ENCODE measurements at regions of chr2 and their contacts with region 1.

Region 1: DNA sequence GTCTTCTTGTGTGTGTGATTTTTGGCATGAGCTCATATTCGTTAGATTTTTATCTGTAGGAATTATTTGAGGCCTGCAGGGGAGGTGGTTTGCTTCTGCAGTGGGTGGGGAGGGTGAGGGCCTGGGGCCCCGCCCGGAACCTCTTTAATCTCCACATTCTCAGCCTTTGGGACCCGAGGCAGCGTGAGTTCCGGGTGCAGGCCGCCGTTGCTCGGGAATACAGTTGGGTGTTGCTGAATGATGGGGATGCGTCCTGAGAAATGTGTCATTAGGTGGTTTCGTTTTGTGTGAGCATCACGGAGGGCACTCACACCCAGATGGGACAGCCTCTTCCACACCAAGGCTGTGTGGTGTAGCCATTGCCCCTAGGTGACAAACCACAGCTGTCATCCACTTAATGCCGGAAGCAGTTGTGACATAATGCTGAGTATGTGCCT is 13.7 kb upstream of the GAL3ST2 start:
- DNase-seq: peak; percentile 65
- ATAC-seq: peak; percentile 76
- H3K4me3 Mint-ChIP-seq: no peak overlapping the region
- H3K27ac Mint-ChIP-seq: peak overlapping the region; percentile 76
- H3K4me1 Mint-ChIP-seq: peaks cover 17% of the 10 kb centered on the region
- H3K27me3 Mint-ChIP-seq: no peaks in the 10 kb centered on the region

Region 2: GRCh38 chr2:241803387-241804325 is 40.7 kb after region 1 on chr2:
- CTCF ChIA-PET with region 1: no interaction called
- POLR2A ChIA-PET with region 1: no interaction called
- intact Hi-C with region 1: loop called in 1 of 2 experiments (anchors 5 kb)
- DNase-seq: peak; percentile 69
- ATAC-seq: peak; percentile 76
- H3K4me3 Mint-ChIP-seq: peak overlapping the region; percentile 58
- H3K27ac Mint-ChIP-seq: peak overlapping the region; percentile 12
- H3K4me1 Mint-ChIP-seq: peaks cover 7% of the 10 kb centered on the region
- H3K27me3 Mint-ChIP-seq: peaks cover 6% of the 10 kb centered on the region

Region 3: DNA sequence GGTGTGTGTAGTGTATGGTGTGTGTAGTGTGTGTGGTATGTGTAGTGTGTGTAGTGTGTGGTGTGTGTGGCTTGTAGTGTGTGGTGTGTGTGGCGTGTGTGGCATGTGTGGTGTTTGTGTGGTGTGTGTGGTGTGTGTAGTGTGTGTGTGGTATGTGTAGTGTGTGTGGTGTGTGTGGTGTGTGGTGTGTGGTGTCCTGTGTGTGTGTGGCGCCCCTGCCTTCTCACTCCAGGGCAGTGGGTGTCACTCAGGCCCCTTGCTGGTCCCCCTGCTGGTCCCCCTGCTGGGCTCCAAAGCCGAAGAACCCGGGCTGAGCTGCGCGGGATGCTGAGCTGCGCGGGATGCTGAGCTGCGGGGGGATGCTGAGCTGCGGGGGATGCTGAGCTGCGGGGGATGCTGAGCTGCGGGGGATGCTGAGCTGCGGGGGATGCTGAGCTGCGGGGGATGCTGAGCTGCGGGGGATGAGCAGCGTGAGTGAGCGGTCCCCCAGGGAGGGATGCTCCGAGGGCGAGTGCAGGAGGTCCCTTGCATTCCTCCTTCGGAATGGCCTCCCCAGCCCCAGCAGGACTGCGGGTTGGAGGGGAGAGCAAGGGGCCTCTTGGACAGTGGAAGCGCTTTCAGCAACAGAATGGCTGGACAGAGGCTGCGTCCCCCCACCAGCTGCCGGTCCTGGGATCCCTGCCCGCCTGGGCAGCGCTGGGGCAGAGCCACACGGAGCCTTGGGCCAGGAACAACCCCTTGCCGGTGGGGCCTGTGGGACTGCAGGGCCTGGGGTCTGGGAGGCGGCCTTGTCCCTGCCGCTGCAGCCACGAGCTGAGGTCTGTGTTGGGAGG is 103.2 kb after region 1 on chr2:
- CTCF ChIA-PET with region 1: no interaction called
- POLR2A ChIA-PET with region 1: no interaction called
- intact Hi-C with region 1: loop called in 1 of 2 experiments (anchors 2 kb)
- DNase-seq: peak; percentile 70
- ATAC-seq: no peak
- H3K4me3 Mint-ChIP-seq: no peak overlapping the region
- H3K27ac Mint-ChIP-seq: no peak overlapping the region
- H3K4me1 Mint-ChIP-seq: peaks cover 80% of the 10 kb centered on the region
- H3K27me3 Mint-ChIP-seq: peaks cover 24% of the 10 kb centered on the region

Measured in activated CD4-positive, alpha-beta T cell treated with anti-CD3 and anti-CD28 coated beads for 36 hours (primary cell).